CD4-positive, alpha-beta memory T cell (primary cell): ENCODE measurements at regions of chr10 and their contacts with region 1.

Region 1: DNA sequence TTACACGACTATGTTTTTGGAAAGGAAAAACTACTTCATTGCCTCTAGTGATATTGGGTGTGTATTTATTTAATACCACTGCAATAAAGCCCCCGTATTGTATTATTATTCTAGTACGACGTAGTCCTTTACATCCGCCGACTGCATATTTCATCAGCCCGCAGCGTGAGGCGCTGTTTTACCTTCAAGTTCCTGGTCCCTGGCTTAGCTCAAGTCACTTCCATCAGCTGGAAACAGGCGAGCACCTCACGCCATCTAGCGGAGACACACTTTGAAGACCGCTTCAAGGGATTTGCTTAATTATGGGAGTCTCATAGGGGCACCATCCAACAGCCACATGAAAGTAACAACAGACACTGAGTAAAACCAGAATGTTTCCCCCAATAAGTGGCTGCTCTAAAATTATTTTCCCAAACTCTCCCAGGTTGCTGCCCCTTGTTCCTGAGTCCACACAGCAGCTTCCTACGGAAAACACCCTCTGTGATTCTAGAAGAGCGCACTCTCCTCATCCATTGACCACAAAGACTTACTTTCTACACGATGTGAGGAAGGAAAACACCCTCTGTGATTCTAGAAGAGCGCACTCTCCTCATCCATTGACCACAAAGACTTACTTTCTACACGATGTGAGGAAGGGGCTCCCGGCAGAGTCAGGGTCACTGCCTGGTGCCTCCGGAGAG is 15.7 kb upstream of the ITIH2 start:
- DNase-seq: peak; percentile 66 to 76 (median 69)
- H3K4me3 ChIP-seq: no peak overlapping the region
- H3K4me3 Mint-ChIP-seq: peak overlapping the region in 2 of 8 donors; percentile 36 to 64
- H3K27ac ChIP-seq: no peak overlapping the region
- H3K27ac Mint-ChIP-seq: peak overlapping the region in 1 of 7 donors; percentile 66
- H3K4me1 ChIP-seq: no peaks in the 10 kb centered on the region
- H3K4me1 Mint-ChIP-seq: peaks cover 3 to 5% (median 3%) of the 10 kb centered on the region in 4 donors
- H3K27me3 ChIP-seq: no peaks in the 10 kb centered on the region
- H3K27me3 Mint-ChIP-seq: peaks cover 2 to 13% of the 10 kb centered on the region in 2 donors

Region 2: GRCh38 chr10:7260412-7260900 is 426.9 kb before region 1 on chr10:
- CTCF ChIA-PET with region 1: interaction called, 4 read pairs
- POLR2A ChIA-PET with region 1: no interaction called
- intact Hi-C with region 1: loop called (anchors 10 kb)
- DNase-seq: peak in 4 of 5 donors; percentile 41 to 48 (median 43)
- H3K4me3 ChIP-seq: no peak overlapping the region
- H3K4me3 Mint-ChIP-seq: peak overlapping the region in 4 of 8 donors; percentile 1 to 78 (median 42)
- H3K27ac ChIP-seq: no peak overlapping the region
- H3K27ac Mint-ChIP-seq: peak overlapping the region in 6 of 7 donors; percentile 62 to 97 (median 84)
- H3K4me1 ChIP-seq: peaks cover 38% of the 10 kb centered on the region
- H3K4me1 Mint-ChIP-seq: peaks cover 34 to 52% (median 47%) of the 10 kb centered on the region in 4 donors
- H3K27me3 ChIP-seq: no peaks in the 10 kb centered on the region
- H3K27me3 Mint-ChIP-seq: no peaks in the 10 kb centered on the region

Region 3: DNA sequence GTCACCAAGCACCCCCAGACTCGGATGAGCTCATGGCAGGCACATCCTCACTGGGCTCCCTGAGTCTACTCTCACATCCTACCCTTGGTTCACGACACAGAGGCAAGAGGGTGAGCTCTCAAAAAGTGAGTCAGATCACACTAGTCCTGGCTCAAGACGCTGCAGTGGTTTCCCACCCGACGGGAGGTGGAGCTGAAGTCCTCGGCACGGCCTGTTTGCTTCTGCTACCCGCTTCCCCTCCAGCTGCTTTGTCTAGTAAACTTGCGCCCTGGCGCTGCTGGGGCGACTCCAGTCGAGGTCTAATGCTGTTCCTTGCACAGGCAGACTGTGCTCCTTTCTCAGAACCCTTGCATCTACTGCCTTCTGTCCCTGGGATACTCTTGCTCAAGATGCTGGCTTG is 263.1 kb before region 1 on chr10:
- CTCF ChIA-PET with region 1: no interaction called
- POLR2A ChIA-PET with region 1: no interaction called
- intact Hi-C with region 1: loop called (anchors 2 kb)
- DNase-seq: no peak
- H3K4me3 ChIP-seq: no peak overlapping the region
- H3K4me3 Mint-ChIP-seq: no peak overlapping the region
- H3K27ac ChIP-seq: no peak overlapping the region
- H3K27ac Mint-ChIP-seq: no peak overlapping the region
- H3K4me1 ChIP-seq: no peaks in the 10 kb centered on the region
- H3K4me1 Mint-ChIP-seq: peaks cover 0 to 6% (median under 1%) of the 10 kb centered on the region in 4 donors
- H3K27me3 ChIP-seq: no peaks in the 10 kb centered on the region
- H3K27me3 Mint-ChIP-seq: no peaks in the 10 kb centered on the region

Region 4: DNA sequence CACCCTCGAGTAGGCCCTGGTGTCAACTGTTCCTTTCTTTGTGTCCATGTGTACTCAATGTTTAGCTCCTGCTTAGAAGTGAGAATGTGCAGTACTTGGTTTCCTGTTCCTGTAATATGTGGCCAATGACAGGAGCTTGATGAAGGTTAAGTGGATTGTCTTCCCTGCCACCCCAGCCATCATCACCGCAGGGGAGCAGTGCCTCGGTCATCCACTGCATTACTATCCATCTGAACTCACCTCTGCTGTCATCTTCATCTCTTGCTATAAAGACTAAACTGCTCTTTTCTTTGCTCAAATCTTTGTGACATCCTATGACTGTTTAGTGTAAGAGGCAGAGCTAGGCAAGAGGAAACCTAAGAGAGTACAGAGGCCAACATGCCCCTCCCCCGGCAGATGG is 31.3 kb after region 1 on chr10:
- CTCF ChIA-PET with region 1: no interaction called
- POLR2A ChIA-PET with region 1: no interaction called
- intact Hi-C with region 1: no loop called
- DNase-seq: no peak
- H3K4me3 ChIP-seq: no peak overlapping the region
- H3K4me3 Mint-ChIP-seq: no peak overlapping the region
- H3K27ac ChIP-seq: no peak overlapping the region
- H3K27ac Mint-ChIP-seq: no peak overlapping the region
- H3K4me1 ChIP-seq: no peaks in the 10 kb centered on the region
- H3K4me1 Mint-ChIP-seq: no peaks in the 10 kb centered on the region
- H3K27me3 ChIP-seq: no peaks in the 10 kb centered on the region
- H3K27me3 Mint-ChIP-seq: peaks cover 4 to 12% of the 10 kb centered on the region in 2 donors

Region 5: GRCh38 chr10:7804741-7805140 is 117.4 kb after region 1 on chr10:
- CTCF ChIA-PET with region 1: no interaction called
- POLR2A ChIA-PET with region 1: no interaction called
- intact Hi-C with region 1: no loop called
- DNase-seq: no peak
- H3K4me3 ChIP-seq: no peak overlapping the region
- H3K4me3 Mint-ChIP-seq: no peak overlapping the region
- H3K27ac ChIP-seq: no peak overlapping the region
- H3K27ac Mint-ChIP-seq: peak overlapping the region in 2 of 7 donors; percentile 23 to 61
- H3K4me1 ChIP-seq: no peaks in the 10 kb centered on the region
- H3K4me1 Mint-ChIP-seq: peaks cover 0 to 4% (median 0%) of the 10 kb centered on the region in 4 donors
- H3K27me3 ChIP-seq: no peaks in the 10 kb centered on the region
- H3K27me3 Mint-ChIP-seq: no peaks in the 10 kb centered on the region

Region 6: GRCh38 chr10:9302120-9302746 is 1614.9 kb after region 1 on chr10:
- CTCF ChIA-PET with region 1: no interaction called
- POLR2A ChIA-PET with region 1: no interaction called
- intact Hi-C with region 1: loop called (anchors 5 kb)
- DNase-seq: peak in 4 of 5 donors; percentile 45 to 48 (median 48)
- H3K4me3 ChIP-seq: no peak overlapping the region
- H3K4me3 Mint-ChIP-seq: no peak overlapping the region
- H3K27ac ChIP-seq: no peak overlapping the region
- H3K27ac Mint-ChIP-seq: no peak overlapping the region
- H3K4me1 ChIP-seq: no peaks in the 10 kb centered on the region
- H3K4me1 Mint-ChIP-seq: no peaks in the 10 kb centered on the region
- H3K27me3 ChIP-seq: no peaks in the 10 kb centered on the region
- H3K27me3 Mint-ChIP-seq: peaks cover 9 to 13% of the 10 kb centered on the region in 2 donors